ENCODE measurements at regions of chr1 and their contacts with region 1.

Region 1: DNA sequence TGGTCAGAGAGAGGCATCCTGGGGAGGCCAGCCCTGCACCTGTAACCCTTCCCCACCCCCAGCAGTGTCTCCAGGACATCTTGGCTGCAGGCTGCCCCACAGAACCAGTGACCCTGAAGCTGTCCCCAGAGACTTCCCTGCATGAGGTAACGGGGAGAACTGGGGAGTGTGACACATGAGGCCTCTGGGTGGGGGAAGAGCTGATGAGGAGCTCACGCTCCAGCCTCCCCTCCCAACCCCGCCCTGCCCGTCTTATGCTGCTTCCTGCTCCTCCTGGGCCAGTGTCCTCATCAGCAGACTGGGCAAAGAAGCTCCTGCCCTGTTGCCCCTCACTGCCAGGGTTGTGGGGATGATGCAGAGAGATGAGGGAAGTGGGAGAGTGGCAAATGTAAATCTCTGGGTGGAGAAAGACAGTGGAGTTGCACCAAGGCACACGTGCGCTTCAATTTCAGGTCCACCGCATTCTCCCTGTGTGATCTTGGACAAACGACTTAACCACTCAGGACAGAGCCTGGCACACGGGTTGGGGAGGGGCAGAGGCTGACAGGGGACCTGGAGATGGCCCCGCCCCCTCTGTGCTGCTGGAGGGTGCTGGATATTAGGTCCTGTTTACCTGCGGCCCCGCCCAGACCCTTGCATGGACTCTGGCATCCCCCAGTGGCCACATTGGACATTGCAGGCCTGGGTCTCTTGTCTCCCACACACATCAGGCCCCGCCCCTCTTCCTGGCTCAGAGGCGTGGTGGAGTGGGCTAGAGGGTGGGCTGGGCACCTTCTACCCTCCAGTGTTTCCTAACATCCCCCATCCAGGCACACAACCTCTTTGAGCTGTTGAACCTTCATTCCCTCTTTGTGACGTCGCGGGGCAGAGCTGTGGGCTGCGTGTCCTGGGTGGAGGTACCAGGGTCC is 12.3 kb downstream of the CLCNKB start:
- DNase-seq: peak; percentile 71 to 87 (median 84)
- ATAC-seq: peak; percentile 71 to 89 (median 80)
- H3K4me3 ChIP-seq: no peak overlapping the region
- H3K27ac ChIP-seq: no peak overlapping the region
- H3K4me1 ChIP-seq: peaks cover 0 to 6% (median 0%) of the 10 kb centered on the region in 12 donors
- H3K27me3 ChIP-seq: no peaks in the 10 kb centered on the region
- CTCF ChIP-seq: peak; percentile 78 to 97 (median 88)
- POLR2A ChIP-seq: no peak

Region 2: GRCh38 chr1:15788624-15789301 is 267.1 kb before region 1 on chr1:
- intact Hi-C with region 1: loop called in 4 of 10 experiments (anchors 5 to 10 kb)
- DNase-seq: no peak
- ATAC-seq: no peak
- H3K4me3 ChIP-seq: no peak overlapping the region
- H3K27ac ChIP-seq: no peak overlapping the region
- H3K4me1 ChIP-seq: peaks cover 0 to 17% (median 6%) of the 10 kb centered on the region in 12 donors
- H3K27me3 ChIP-seq: no peaks in the 10 kb centered on the region
- CTCF ChIP-seq: no peak
- POLR2A ChIP-seq: no peak

Region 3: GRCh38 chr1:15803354-15803753 is 252.5 kb before region 1 on chr1:
- intact Hi-C with region 1: loop called in 4 of 10 experiments (anchors 5 to 10 kb)
- DNase-seq: no peak
- ATAC-seq: no peak
- H3K4me3 ChIP-seq: no peak overlapping the region
- H3K27ac ChIP-seq: no peak overlapping the region
- H3K4me1 ChIP-seq: peaks cover 0 to 22% (median 11%) of the 10 kb centered on the region in 12 donors
- H3K27me3 ChIP-seq: no peaks in the 10 kb centered on the region
- CTCF ChIP-seq: peak; percentile 23 to 61 (median 37)
- POLR2A ChIP-seq: no peak

Region 4: DNA sequence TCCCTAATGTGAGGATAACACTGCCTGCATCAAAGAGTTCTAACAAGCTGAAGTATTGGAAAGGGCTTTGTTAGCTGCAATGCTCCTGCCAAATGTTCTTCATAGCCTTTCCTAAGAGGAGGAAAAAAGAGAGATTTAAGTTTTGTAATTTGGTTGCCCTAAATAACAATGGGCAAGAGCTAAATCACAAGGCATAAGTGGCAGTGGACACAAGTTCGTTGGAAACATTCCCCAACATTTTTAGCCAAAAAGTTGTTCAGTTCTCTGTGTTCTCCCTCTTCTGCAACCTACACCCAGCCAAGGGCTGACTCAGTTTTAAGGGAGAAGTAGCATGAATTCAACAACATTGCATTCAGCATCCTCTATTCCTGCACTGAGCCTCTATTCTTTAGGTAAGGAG is 245.8 kb before region 1 on chr1:
- intact Hi-C with region 1: loop called in 3 of 10 experiments (anchors 5 to 10 kb)
- DNase-seq: no peak
- ATAC-seq: no peak
- H3K4me3 ChIP-seq: no peak overlapping the region
- H3K27ac ChIP-seq: no peak overlapping the region
- H3K4me1 ChIP-seq: peaks cover 0 to 5% (median 0%) of the 10 kb centered on the region in 12 donors
- H3K27me3 ChIP-seq: no peaks in the 10 kb centered on the region
- CTCF ChIP-seq: no peak
- POLR2A ChIP-seq: no peak

Region 5: DNA sequence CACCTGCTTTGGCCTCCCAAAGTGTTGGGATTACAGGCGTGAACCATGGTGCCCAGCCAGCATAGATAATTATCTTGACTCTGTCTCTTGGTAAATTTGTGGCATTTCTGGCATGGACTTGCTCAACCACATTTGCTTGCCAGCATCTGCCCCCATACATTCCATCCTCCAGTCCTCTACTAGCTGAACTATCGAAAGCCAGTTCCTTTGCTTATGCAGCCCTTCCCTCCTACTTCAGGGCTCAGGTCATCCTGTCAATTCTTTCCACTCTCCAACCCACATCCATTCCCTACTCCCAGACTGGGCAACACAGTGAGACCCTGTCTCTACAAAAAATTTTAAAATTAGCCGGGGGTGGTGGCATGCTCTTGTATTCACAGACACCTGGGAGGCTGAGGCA is 235.4 kb before region 1 on chr1:
- intact Hi-C with region 1: loop called in 1 of 10 experiments (anchors 5 kb)
- DNase-seq: no peak
- ATAC-seq: no peak
- H3K4me3 ChIP-seq: no peak overlapping the region
- H3K27ac ChIP-seq: no peak overlapping the region
- H3K4me1 ChIP-seq: peaks cover 0 to 10% (median 3%) of the 10 kb centered on the region in 12 donors
- H3K27me3 ChIP-seq: no peaks in the 10 kb centered on the region
- CTCF ChIP-seq: no peak
- POLR2A ChIP-seq: no peak

Region 6: DNA sequence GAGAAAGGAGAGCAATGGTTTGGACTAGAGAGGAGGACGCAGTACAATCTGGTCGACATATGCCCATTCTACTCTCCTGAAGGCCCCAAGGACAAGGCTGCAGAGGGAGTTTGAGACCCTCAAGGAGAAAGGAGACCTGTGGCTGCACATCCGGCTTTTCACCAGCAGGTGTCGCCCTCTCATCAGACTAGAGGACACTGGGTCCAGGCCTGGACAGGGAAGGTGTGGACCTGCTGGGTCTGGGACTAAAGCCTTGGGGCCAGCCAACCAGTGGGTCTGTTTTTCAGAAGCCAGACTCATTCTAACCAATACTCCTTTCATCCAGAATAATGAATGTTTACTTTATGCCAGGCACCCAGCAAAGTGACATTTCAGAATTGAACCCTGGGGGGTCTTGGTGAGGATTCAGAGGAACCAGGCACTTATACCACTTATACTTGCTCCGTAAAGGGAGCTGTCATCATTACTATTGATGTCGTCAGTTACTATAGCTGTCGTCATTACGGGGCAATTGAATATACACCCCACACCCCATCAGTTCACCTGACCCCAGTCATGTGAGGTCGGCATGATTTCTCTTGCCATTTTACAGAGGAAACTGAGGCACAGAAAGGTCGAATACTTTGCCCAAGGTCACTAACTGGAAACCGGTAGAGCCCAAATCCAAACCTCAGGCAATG is 46.7 kb before region 1 on chr1:
- intact Hi-C with region 1: loop called (anchors 1 to 5 kb)
- DNase-seq: peak; percentile 76 to 88 (median 79)
- ATAC-seq: peak in 2 of 4 donors; percentile 3 to 19
- H3K4me3 ChIP-seq: no peak overlapping the region
- H3K27ac ChIP-seq: no peak overlapping the region
- H3K4me1 ChIP-seq: peaks cover 0 to 23% (median 15%) of the 10 kb centered on the region in 12 donors
- H3K27me3 ChIP-seq: peaks cover 0 to 5% (median 0%) of the 10 kb centered on the region in 9 donors
- CTCF ChIP-seq: peak; percentile 94 to 99 (median 97)
- POLR2A ChIP-seq: no peak

Region 7: DNA sequence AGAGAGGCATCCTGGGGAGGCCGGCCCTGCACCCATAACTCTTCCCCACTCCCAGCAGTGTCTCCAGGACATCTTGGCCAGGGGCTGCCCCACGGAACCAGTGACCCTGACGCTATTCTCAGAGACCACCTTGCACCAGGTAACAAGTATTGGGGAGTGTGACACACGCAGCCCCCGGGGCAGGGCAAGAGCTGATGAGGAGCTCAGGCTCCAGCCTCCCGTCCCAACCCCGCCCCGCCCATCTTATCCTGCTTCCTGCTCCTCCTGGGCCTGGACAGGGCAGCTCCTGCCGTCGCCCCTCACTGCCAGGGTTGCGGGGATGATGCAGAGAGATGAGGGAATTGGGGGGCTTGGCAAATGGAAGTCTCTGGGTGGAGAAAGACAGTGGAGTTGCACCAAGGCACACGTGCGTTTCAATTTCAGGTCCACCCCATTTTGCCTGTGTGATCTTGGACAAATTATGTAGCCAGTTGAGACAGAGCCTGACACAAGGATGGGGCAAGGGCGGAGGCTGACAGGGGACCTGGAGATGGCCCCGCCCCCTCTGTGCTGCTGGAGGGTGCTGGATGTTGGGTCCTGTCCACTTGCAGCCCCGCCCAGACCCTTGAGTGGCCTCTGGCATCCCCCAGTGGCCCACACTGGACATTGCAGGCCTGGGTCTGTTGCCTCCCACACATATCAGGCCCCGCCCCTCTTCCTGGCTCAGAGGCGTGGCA is 23.3 kb before region 1 on chr1:
- intact Hi-C with region 1: loop called in 4 of 10 experiments (anchors 1 to 2 kb)
- DNase-seq: peak; percentile 87 to 93 (median 90)
- ATAC-seq: peak; percentile 81 to 96 (median 93)
- H3K4me3 ChIP-seq: no peak overlapping the region
- H3K27ac ChIP-seq: no peak overlapping the region
- H3K4me1 ChIP-seq: peaks cover 0 to 11% (median 4%) of the 10 kb centered on the region in 12 donors
- H3K27me3 ChIP-seq: peaks cover 0 to 6% (median 0%) of the 10 kb centered on the region in 9 donors
- CTCF ChIP-seq: peak; percentile 90 to 99 (median 96)
- POLR2A ChIP-seq: no peak

Measured in heart left ventricle (tissue), 16 donors.